ENCODE measurements at regions of chr5 and their contacts with region 1.

Region 1: GRCh38 chr5:179907570-179908324 is at the start of gene TBC1D9B:
- DNase-seq: no peak
- ATAC-seq: peak; percentile 91
- H3K4me3 ChIP-seq: peak within 1 kb of the TSS; percentile 70 to 90
- H3K27ac ChIP-seq: peak within 1 kb of the TSS; percentile 77
- H3K4me1 ChIP-seq: peaks cover 6 to 18% of the 10 kb centered on the region in 2 experiments; a peak in 3 of 4 replicates
- H3K27me3 ChIP-seq: no peaks in the 10 kb centered on the region
- CTCF ChIP-seq: peak in 1 of 3 experiments; percentile 7; a peak in 1 of 6 replicates
- POLR2A ChIP-seq: peak; percentile 81
- RAD21 ChIP-seq: no peak
- total RNA-seq, gene TBC1D9B: 127 TPM

Region 2: GRCh38 chr5:180084688-180085561 is 177.2 kb after region 1 on chr5:
- CTCF ChIA-PET with region 1: no interaction called
- POLR2A ChIA-PET with region 1: no interaction called
- RAD21 ChIA-PET with region 1: no interaction called
- intact Hi-C with region 1: loop called (anchors 10 kb)
- DNase-seq: no peak
- ATAC-seq: peak; percentile 50
- H3K4me3 ChIP-seq: no peak overlapping the region
- H3K27ac ChIP-seq: no peak overlapping the region
- H3K4me1 ChIP-seq: peaks cover 9 to 10% of the 10 kb centered on the region in 2 experiments; a peak in 3 of 4 replicates
- H3K27me3 ChIP-seq: no peaks in the 10 kb centered on the region
- CTCF ChIP-seq: no peak
- POLR2A ChIP-seq: no peak
- RAD21 ChIP-seq: no peak

Region 3: DNA sequence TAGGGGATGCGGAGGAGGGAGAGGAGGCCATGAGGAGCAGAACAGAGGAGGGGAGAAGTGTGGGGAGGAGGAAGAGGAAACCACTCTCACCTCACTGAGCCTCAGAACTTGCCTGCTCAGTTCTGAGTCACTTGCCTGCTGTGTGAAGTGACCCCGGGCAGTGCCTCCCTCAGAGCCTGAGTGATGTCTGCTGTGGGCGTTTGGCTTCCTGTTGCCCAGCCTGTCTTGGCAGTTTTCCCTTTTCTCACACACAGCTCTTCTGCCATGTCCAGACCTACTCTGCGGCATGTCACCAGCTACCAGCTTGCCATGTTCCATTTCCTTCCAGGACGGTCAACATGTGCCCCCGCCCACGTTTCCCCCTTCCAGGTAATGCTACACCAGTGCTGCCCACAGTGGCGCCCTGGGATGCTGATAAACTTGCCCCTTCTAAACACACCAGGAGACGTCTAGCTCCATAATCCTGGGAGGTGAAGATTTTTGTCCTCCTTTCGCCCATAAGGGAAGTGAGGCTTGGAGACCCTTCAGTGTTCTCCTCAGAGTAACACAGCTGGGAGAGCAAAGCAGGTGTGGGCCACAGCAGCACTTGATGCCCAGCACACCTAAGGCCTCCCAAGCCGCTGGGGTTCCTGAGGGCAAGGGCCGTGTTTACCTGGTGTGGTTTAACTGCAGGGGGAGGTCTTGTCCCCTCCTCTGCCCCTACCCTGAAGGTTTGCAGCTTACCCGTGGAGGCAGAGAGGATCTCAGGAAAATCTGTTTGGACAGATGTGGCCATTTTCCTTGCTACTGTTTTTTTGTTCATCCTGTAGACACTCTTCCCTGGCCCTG is 227.6 kb after region 1 on chr5:
- CTCF ChIA-PET with region 1: no interaction called
- POLR2A ChIA-PET with region 1: no interaction called
- RAD21 ChIA-PET with region 1: no interaction called
- intact Hi-C with region 1: no loop called
- DNase-seq: peak; percentile 48
- ATAC-seq: peak; percentile 82
- H3K4me3 ChIP-seq: peak overlapping the region in 1 of 2 experiments; percentile 24; a peak in 2 of 4 replicates
- H3K27ac ChIP-seq: no peak overlapping the region; the same call in 1 of the 2 replicates
- H3K4me1 ChIP-seq: peaks cover 11 to 23% of the 10 kb centered on the region in 2 experiments
- H3K27me3 ChIP-seq: no peaks in the 10 kb centered on the region
- CTCF ChIP-seq: no peak
- POLR2A ChIP-seq: no peak
- RAD21 ChIP-seq: no peak